Esophagus muscularis mucosa (tissue), 4 donors: ENCODE measurements at regions of chr11 and their contacts with region 1.

Region 1: GRCh38 chr11:26947379-26947844 is 46.5 kb upstream of the FIBIN start:
- DNase-seq: no peak
- H3K4me3 ChIP-seq: no peak overlapping the region
- H3K27ac ChIP-seq: peak overlapping the region; percentile 65 to 79 (median 74)
- H3K4me1 ChIP-seq: peaks cover 0 to 64% (median 43%) of the 10 kb centered on the region in 4 donors
- H3K27me3 ChIP-seq: no peaks in the 10 kb centered on the region
- CTCF ChIP-seq: no peak
- EP300 ChIP-seq: peak; percentile 53
- POLR2A ChIP-seq: no peak

Region 2: GRCh38 chr11:26827567-26828081 is 119.8 kb before region 1 on chr11:
- intact Hi-C with region 1: loop called (anchors 5 kb)
- DNase-seq: no peak
- H3K4me3 ChIP-seq: no peak overlapping the region
- H3K27ac ChIP-seq: peak overlapping the region; percentile 62 to 74 (median 68)
- H3K4me1 ChIP-seq: peaks cover 0 to 21% (median 18%) of the 10 kb centered on the region in 4 donors
- H3K27me3 ChIP-seq: no peaks in the 10 kb centered on the region
- CTCF ChIP-seq: no peak
- EP300 ChIP-seq: peak; percentile 33
- POLR2A ChIP-seq: no peak

Region 3: DNA sequence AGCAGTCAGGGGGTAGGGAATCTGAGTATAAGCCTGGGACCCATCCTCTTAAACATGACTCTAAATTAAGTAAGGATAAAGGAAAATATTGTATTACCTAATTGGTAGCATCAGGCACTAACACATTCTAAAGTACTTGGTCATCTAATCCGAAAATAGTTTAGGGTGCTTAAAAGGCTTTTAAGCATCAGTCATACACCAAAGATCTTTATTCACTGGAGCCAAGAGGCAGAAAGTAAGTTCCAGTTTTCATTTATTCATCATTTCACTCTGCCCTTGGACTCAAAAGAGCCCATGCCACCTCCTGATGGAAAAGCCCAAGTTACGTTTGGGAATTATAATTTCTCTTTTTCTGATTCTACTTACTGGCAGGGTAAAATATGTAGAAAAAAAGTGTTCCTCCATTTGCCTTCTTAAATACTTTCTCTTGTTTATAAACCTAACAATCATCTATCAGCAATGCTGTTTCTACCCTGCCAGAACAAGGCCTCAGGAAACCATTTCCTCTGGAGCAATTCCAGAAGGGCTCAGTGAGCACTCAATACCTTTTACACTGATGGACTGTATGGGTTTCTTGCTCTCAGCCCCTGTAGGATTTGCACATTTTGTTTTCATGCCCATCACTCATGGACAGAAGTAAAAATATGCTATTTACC is 105.5 kb before region 1 on chr11:
- intact Hi-C with region 1: loop called (anchors 5 kb)
- DNase-seq: no peak
- H3K4me3 ChIP-seq: no peak overlapping the region
- H3K27ac ChIP-seq: peak overlapping the region; percentile 72 to 78 (median 77)
- H3K4me1 ChIP-seq: peaks cover under 1 to 57% (median 46%) of the 10 kb centered on the region in 4 donors
- H3K27me3 ChIP-seq: no peaks in the 10 kb centered on the region
- CTCF ChIP-seq: no peak
- EP300 ChIP-seq: peak; percentile 12
- POLR2A ChIP-seq: no peak

Region 4: GRCh38 chr11:26993965-26994457 is 46.6 kb after region 1 on chr11 and contains the start of gene FIBIN:
- intact Hi-C with region 1: loop called (anchors 2 kb)
- DNase-seq: no peak
- H3K4me3 ChIP-seq: peak within 1 kb of the TSS; percentile 66 to 88 (median 71)
- H3K27ac ChIP-seq: peak within 1 kb of the TSS; percentile 83 to 92 (median 87)
- H3K4me1 ChIP-seq: peaks cover 0 to 55% (median 32%) of the 10 kb centered on the region in 4 donors
- H3K27me3 ChIP-seq: no peaks in the 10 kb centered on the region
- CTCF ChIP-seq: peak in 1 of 3 experiments; percentile 3
- EP300 ChIP-seq: no peak
- POLR2A ChIP-seq: no peak
- total RNA-seq, gene FIBIN: 76.4 to 151 (median 101) TPM

Region 5: DNA sequence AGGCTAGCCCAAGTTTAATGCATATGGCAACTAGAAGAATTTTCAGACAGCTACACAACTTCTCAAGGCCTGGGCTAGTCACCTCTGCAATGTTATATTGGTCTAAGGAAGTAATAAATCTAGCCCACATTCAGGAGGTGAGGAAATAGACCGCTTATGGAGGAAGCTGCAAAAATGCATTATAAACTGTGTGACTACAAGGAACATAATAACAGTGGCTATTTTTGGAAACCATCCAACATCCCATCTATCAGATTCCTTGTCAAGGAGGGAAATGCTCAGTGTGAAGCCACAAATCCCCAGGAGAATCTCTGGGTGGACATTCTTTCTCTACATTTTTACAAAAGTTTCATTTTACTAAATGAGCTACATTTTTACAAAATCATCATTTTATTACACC is 169.3 kb after region 1 on chr11:
- intact Hi-C with region 1: no loop called
- DNase-seq: no peak
- H3K4me3 ChIP-seq: no peak overlapping the region
- H3K27ac ChIP-seq: no peak overlapping the region
- H3K4me1 ChIP-seq: peaks cover 0 to 9% (median 3%) of the 10 kb centered on the region in 4 donors
- H3K27me3 ChIP-seq: no peaks in the 10 kb centered on the region
- CTCF ChIP-seq: no peak
- EP300 ChIP-seq: no peak
- POLR2A ChIP-seq: no peak